ENCODE measurements at regions of chrX and their contacts with region 1.

Region 1: GRCh38 chrX:108091266-108091877 is at the starts of genes ATG4A and PSMD10:
- DNase-seq: peak; percentile 85
- H3K4me3 Mint-ChIP-seq: no peak within 1 kb of the TSS
- H3K27ac Mint-ChIP-seq: no peak within 1 kb of the TSS
- H3K4me1 Mint-ChIP-seq: peaks cover 17% of the 10 kb centered on the region
- H3K27me3 Mint-ChIP-seq: no peaks in the 10 kb centered on the region
- total RNA-seq, gene ATG4A: 9.6 and 9.8 TPM in 2 replicates
- total RNA-seq, gene PSMD10: 42.5 and 44.1 TPM in 2 replicates

Region 2: GRCh38 chrX:106611679-106612392 is 1479.5 kb before region 1 on chrX and contains the start of gene RADX:
- intact Hi-C with region 1: loop called (anchors 2 kb)
- DNase-seq: peak; percentile 82
- H3K4me3 Mint-ChIP-seq: peak within 1 kb of the TSS; percentile 93
- H3K27ac Mint-ChIP-seq: peak within 1 kb of the TSS; percentile 89
- H3K4me1 Mint-ChIP-seq: peaks cover 26% of the 10 kb centered on the region
- H3K27me3 Mint-ChIP-seq: no peaks in the 10 kb centered on the region
- total RNA-seq, gene RADX: 5.6 and 6.3 TPM in 2 replicates

Region 3: GRCh38 chrX:107716816-107717700 is 374.3 kb before region 1 on chrX:
- intact Hi-C with region 1: loop called (anchors 1 kb)
- DNase-seq: peak; percentile 84
- H3K4me3 Mint-ChIP-seq: peak overlapping the region; percentile 93
- H3K27ac Mint-ChIP-seq: peak overlapping the region; percentile 87
- H3K4me1 Mint-ChIP-seq: peaks cover 46% of the 10 kb centered on the region
- H3K27me3 Mint-ChIP-seq: no peaks in the 10 kb centered on the region

Region 4: DNA sequence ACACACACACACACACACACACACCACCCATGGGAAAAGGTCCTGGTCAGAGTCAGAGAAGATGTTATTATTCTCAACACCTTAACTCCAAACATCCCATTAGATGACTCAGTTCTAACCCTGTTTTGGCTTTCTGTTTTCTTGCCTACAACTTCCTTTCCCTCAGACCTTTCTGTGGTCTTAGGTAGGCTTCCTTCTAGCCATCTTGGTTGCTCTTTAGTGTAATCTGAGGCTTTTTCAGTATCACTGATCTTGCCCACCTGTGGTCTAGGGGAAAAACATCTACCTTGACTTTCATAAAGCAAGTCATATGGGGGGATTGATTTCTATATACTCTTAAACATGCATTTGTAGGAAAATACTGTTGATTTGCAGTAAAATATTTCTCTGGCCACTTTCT is 57.2 kb after region 1 on chrX:
- intact Hi-C with region 1: loop called (anchors 5 kb)
- DNase-seq: no peak
- H3K4me3 Mint-ChIP-seq: peak overlapping the region; percentile 6
- H3K27ac Mint-ChIP-seq: peak overlapping the region; percentile 11
- H3K4me1 Mint-ChIP-seq: peaks cover 14% of the 10 kb centered on the region
- H3K27me3 Mint-ChIP-seq: no peaks in the 10 kb centered on the region

Region 5: GRCh38 chrX:108380222-108380621 is 288.9 kb after region 1 on chrX:
- intact Hi-C with region 1: no loop called
- DNase-seq: no peak
- H3K4me3 Mint-ChIP-seq: no peak overlapping the region
- H3K27ac Mint-ChIP-seq: no peak overlapping the region
- H3K4me1 Mint-ChIP-seq: no peaks in the 10 kb centered on the region
- H3K27me3 Mint-ChIP-seq: no peaks in the 10 kb centered on the region

Measured in activated T-helper 1 cell treated with anti-CD3 and anti-CD28 coated beads, Interleukin-12 subunit alpha, Interleukin-12 subunit beta, Interleukin-2, Interleukin-4 antibody, amounts not matched to agents 30 ng/mL and 10 ng/mL and 1 ng/mL, durations not matched to agents 14 hours and 24 hours and 36 hours (primary cell).